ENCODE measurements at regions of chr10 and their contacts with region 1.

Region 1: GRCh38 chr10:63268798-63269503 is 135.8 kb downstream of the NRBF2 start:
- DNase-seq: peak; percentile 95
- H3K4me3 Mint-ChIP-seq: peak overlapping the region; percentile 93
- H3K27ac Mint-ChIP-seq: peak overlapping the region; percentile 99
- H3K4me1 Mint-ChIP-seq: peaks cover 21% of the 10 kb centered on the region
- H3K27me3 Mint-ChIP-seq: no peaks in the 10 kb centered on the region

Region 2: DNA sequence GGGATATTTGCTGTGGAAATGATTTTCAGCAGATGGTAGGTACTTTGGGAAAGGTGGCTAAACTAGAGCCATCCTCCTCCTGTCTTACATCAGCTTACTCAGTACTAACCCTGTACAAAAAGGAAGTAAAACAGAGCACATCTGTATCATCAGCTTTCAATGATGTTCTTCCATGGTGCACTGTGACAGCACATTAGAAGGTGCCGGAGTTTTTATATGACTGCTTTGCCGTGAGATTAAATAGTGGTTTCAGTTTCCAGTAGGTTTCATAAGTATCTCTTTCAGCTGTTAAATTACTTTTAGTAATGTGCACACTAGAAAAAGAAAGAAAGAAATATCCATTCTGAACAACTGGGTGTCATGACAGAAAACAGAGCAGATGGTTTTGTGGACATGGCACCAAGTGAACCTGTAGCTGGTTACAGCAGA is 1281.0 kb before region 1 on chr10:
- intact Hi-C with region 1: loop called (anchors 10 kb)
- DNase-seq: peak; percentile 84
- H3K4me3 Mint-ChIP-seq: peak overlapping the region; percentile 72
- H3K27ac Mint-ChIP-seq: peak overlapping the region; percentile 96
- H3K4me1 Mint-ChIP-seq: peaks cover 71% of the 10 kb centered on the region
- H3K27me3 Mint-ChIP-seq: no peaks in the 10 kb centered on the region

Region 3: GRCh38 chr10:63173468-63174232 is 95.3 kb before region 1 on chr10:
- intact Hi-C with region 1: loop called (anchors 2 kb)
- DNase-seq: peak; percentile 72
- H3K4me3 Mint-ChIP-seq: peak overlapping the region; percentile 41
- H3K27ac Mint-ChIP-seq: peak overlapping the region; percentile 81
- H3K4me1 Mint-ChIP-seq: peaks cover 52% of the 10 kb centered on the region
- H3K27me3 Mint-ChIP-seq: no peaks in the 10 kb centered on the region

Region 4: GRCh38 chr10:63206997-63207811 is 61.7 kb before region 1 on chr10:
- intact Hi-C with region 1: no loop called
- DNase-seq: peak; percentile 64
- H3K4me3 Mint-ChIP-seq: peak overlapping the region; percentile 38
- H3K27ac Mint-ChIP-seq: peak overlapping the region; percentile 90
- H3K4me1 Mint-ChIP-seq: peaks cover 60% of the 10 kb centered on the region
- H3K27me3 Mint-ChIP-seq: no peaks in the 10 kb centered on the region

Region 5: DNA sequence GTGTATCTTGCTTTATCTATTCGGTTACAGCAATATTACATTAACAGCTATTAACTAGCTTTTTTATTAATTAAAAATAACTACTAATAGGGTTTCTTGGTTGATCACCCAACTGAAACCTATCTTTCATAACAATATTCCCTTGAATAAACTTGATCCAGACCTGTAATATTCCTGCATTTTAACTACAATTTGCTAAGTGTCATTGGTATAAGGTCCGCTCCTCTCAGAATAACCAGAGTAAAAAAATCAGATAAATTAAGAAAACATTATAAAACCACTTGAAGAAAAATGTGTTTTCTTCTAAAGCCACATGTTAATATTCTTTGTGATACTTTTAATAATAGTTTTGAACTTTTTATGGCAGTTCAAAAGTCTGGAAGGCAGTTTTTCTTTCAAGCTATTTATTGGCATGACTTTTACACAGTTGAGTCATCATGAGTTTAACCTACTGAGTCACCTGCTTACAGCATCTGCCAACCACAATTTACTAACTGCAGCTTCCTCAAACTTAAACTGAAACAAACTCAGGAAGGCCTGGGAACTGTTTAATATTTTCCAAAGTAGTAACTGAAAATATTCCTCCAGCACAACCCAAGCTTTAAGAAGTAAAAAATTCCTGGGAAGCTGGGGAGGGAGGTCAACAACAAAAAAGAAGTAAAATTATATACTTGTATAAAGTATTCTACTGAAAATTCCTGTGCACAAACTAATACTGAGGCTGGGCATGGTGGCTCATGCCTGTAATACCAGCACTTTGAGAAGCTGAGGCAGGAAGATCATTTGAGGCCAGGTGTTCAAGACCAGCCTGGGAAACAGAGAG is 32.6 kb before region 1 on chr10:
- intact Hi-C with region 1: loop called (anchors 1 kb)
- DNase-seq: peak; percentile 77
- H3K4me3 Mint-ChIP-seq: peak overlapping the region; percentile 32
- H3K27ac Mint-ChIP-seq: peak overlapping the region; percentile 71
- H3K4me1 Mint-ChIP-seq: peaks cover 42% of the 10 kb centered on the region
- H3K27me3 Mint-ChIP-seq: no peaks in the 10 kb centered on the region

Region 6: DNA sequence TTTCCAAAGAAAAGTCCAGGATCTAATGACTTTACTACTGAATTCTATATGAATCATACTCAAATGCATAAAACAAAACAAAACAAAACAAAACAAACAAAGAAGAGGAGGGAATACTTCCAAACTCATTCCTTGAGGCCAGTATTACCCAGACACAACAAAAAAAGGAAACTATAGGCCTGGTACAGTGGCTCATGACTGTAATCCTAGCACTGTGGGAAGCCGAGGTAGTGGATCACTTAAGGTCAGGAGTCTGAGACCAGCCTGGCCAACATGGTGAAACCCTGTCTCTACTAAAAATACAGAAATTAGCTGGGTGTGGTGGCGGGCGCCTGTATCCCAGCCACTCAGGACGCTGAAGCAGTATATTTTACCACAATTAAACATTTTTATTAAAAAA is 21.2 kb before region 1 on chr10:
- intact Hi-C with region 1: no loop called
- DNase-seq: no peak
- H3K4me3 Mint-ChIP-seq: no peak overlapping the region
- H3K27ac Mint-ChIP-seq: no peak overlapping the region
- H3K4me1 Mint-ChIP-seq: peaks cover 31% of the 10 kb centered on the region
- H3K27me3 Mint-ChIP-seq: no peaks in the 10 kb centered on the region

Region 7: DNA sequence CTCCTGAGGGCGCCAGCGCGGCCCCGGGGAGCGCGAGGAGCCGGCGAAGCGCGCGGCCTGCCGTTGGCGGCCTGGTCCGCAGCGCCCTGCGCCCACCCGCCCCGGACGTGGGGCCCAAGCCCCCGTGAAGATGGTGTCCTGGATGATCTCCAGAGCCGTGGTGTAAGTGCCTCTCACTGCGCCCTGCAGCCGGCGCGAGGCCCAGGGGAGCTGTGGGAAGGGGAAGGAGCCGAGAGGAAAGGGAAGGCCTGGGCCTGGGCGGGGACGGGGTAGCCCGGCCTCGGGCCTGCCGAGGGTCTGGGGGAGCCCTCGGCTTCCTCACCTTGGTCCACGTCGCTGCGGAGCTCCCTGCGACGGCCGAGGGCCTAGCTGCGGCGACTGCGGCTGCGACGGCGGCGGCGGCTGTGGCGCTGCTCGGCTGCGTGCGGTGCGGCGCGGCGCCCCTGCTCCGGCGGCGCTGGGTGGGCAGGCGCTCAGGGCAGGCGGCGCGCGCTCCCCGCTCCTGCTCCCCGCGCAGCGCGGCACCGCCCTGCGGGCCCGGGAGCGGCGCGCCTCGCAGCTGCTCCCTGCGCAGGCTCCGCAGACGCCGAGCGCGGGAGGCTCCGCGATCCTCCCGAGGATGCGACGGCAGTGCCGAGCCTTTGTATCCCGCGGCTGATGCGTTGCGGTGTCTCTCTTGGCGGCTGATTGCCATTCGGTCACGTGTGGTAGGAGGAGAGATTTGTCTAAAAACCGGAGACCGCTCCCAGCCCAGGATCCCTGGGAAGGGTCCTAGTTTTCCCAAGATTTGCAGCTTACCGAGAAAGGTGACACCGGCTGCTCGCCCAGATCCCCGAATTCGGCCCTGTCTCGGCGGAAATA is 252.7 kb after region 1 on chr10:
- intact Hi-C with region 1: loop called (anchors 1 kb)
- DNase-seq: peak; percentile 87
- H3K4me3 Mint-ChIP-seq: peak overlapping the region; percentile 91
- H3K27ac Mint-ChIP-seq: peak overlapping the region; percentile 94
- H3K4me1 Mint-ChIP-seq: peaks cover 52% of the 10 kb centered on the region
- H3K27me3 Mint-ChIP-seq: no peaks in the 10 kb centered on the region

Region 8: GRCh38 chr10:63720072-63720537 is 451.2 kb after region 1 on chr10:
- intact Hi-C with region 1: loop called (anchors 5 kb)
- DNase-seq: peak; percentile 85
- H3K4me3 Mint-ChIP-seq: peak overlapping the region; percentile 60
- H3K27ac Mint-ChIP-seq: no peak overlapping the region
- H3K4me1 Mint-ChIP-seq: peaks cover 22% of the 10 kb centered on the region
- H3K27me3 Mint-ChIP-seq: peaks cover 8% of the 10 kb centered on the region